Activated naive CD4-positive, alpha-beta T cell treated with anti-CD3 and anti-CD28 coated beads for 36 hours (primary cell): ENCODE measurements at regions of chr2 and their contacts with region 1.

Region 1: GRCh38 chr2:190043441-190043840 is 19.1 kb downstream of the MSTN start:
- DNase-seq: no peak
- H3K4me3 Mint-ChIP-seq: no peak overlapping the region
- H3K27ac Mint-ChIP-seq: no peak overlapping the region
- H3K4me1 Mint-ChIP-seq: no peaks in the 10 kb centered on the region
- H3K27me3 Mint-ChIP-seq: peaks cover 11% of the 10 kb centered on the region

Region 2: DNA sequence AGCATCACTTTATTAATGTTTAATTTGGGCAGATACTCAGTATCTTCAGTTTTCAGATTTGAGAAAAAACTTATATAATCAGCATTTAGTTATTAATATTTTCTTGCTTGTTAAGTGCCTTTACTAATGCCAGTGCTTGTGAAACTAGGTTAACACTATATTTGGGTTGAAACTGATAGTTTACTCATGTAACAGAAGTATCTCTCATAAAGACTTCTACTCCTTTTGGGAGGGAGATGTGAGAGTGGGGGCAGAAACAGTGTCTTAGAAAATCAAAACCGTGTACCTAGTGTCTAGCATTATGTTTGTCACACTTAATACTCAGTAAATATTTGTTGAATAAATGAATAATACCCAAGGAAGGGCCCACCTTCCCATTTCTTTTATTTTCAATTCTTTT is 110.4 kb before region 1 on chr2:
- CTCF ChIA-PET with region 1: no interaction called
- intact Hi-C with region 1: no loop called
- DNase-seq: no peak
- H3K4me3 Mint-ChIP-seq: no peak overlapping the region
- H3K27ac Mint-ChIP-seq: no peak overlapping the region
- H3K4me1 Mint-ChIP-seq: no peaks in the 10 kb centered on the region
- H3K27me3 Mint-ChIP-seq: peaks cover 5% of the 10 kb centered on the region

Region 3: GRCh38 chr2:190031971-190032618 is 11.3 kb before region 1 on chr2:
- CTCF ChIA-PET with region 1: interaction called, 10 read pairs
- intact Hi-C with region 1: no loop called
- DNase-seq: no peak
- H3K4me3 Mint-ChIP-seq: no peak overlapping the region
- H3K27ac Mint-ChIP-seq: no peak overlapping the region
- H3K4me1 Mint-ChIP-seq: no peaks in the 10 kb centered on the region
- H3K27me3 Mint-ChIP-seq: peaks cover 4% of the 10 kb centered on the region

Region 4: DNA sequence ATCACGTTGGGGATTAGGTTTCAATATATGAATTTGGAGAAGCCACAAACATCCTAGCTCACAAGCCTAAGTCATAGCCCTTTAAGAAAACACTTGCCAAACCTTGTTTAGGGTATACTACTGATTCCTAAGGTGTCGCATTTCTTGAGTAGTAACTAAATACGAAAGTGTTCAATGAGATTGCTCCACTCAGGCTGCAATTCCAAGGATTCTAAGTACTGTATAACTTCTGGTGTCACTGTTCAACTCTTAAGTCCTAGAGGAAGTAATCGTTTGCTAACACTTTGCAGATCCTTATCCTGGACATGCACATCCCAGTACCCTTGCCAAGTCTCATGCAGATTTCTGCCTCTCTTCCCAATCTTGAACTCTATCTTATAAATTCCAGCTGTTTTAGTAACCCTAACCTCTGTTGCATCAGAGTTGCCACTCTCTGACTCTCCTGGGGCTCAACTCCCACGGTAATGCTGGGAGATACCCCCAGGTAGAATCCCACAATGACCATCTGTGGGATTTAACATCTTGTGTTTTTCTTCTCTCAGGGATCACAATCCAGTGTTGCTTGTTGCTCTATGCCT is 153.8 kb after region 1 on chr2:
- CTCF ChIA-PET with region 1: no interaction called
- intact Hi-C with region 1: no loop called
- DNase-seq: no peak
- H3K4me3 Mint-ChIP-seq: no peak overlapping the region
- H3K27ac Mint-ChIP-seq: no peak overlapping the region
- H3K4me1 Mint-ChIP-seq: no peaks in the 10 kb centered on the region
- H3K27me3 Mint-ChIP-seq: no peaks in the 10 kb centered on the region

Region 5: DNA sequence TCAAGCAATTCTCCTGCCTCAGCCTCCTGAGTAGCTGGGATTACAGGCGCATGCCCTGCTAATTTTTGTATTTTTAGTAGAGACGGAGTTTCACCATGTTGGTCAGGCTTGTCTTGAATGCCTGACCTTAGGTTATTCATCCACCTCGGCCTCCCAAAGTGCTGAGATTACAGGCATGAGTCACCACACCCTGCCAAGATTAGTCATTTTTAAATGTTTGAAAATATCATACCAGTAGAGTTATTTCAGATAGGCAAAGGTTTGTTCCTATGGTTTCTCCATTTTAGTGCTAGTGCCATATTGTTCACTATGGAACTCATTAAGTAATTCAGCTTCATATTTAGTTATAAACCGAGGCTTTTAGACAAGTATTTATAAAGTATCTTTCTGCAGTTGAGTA is 223.9 kb after region 1 on chr2:
- CTCF ChIA-PET with region 1: no interaction called
- intact Hi-C with region 1: no loop called
- DNase-seq: no peak
- H3K4me3 Mint-ChIP-seq: no peak overlapping the region
- H3K27ac Mint-ChIP-seq: no peak overlapping the region
- H3K4me1 Mint-ChIP-seq: no peaks in the 10 kb centered on the region
- H3K27me3 Mint-ChIP-seq: no peaks in the 10 kb centered on the region